IMR-90 (cell line): ENCODE measurements at regions of chr14 and their contacts with region 1.

Region 1: DNA sequence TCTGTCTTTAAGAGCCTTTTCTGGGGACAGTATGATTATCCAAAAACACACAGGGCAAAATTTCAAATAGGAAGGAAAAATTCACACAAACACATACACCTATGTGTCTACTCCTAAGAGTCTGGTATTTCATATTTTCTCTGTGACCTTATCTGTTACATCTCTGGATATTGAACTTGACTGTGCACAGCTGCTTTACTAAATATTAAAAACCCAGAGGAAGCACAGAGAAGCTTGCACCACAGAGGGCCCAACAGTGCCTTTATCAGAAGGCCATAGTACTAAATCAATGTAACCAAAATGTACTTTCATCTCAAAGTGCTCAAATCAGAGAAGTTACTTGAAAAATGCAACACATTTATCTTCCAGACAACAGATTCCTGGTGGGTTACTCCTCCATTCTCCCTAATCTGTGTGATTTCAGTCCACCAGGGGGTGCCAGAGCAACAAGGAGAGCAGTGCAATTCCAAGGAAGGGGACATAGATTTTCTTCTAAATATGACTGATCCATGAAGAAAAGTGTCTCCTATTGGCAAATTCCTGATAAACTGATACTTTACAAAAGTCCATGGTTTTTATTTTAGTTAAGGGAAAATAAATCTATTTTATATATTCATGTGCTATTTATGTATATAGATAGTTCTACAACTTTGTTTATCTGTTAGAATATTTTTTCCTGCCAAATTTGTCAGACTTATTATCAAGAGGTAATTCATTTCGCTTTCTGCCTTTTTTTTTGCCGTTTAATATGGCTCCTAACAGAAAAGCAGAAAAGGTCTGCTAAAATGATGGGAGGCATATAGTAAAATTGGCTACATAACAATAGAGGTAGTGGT is 617.6 kb downstream of the LRFN5 start:
- DNase-seq: peak; percentile 68
- ATAC-seq: peak; percentile 84
- H3K4me3 ChIP-seq: no peak overlapping the region
- H3K27ac ChIP-seq: no peak overlapping the region
- H3K4me1 ChIP-seq: no peaks in the 10 kb centered on the region; the same call in 1 of the 2 replicates
- H3K27me3 ChIP-seq: no peaks in the 10 kb centered on the region
- CTCF ChIP-seq: peak; percentile 72
- POLR2A ChIP-seq: no peak
- RAD21 ChIP-seq: peak; percentile 78

Region 2: GRCh38 chr14:41609704-41610183 is 614.5 kb before region 1 on chr14:
- CTCF ChIA-PET with region 1: no interaction called
- POLR2A ChIA-PET with region 1: no interaction called
- dilution Hi-C with region 1: no loop called
- in situ Hi-C with region 1: no loop called
- intact Hi-C with region 1: loop called (anchors 5 kb)
- DNase-seq: peak; percentile 58
- ATAC-seq: peak; percentile 43
- H3K4me3 ChIP-seq: peak overlapping the region; percentile 18
- H3K27ac ChIP-seq: no peak overlapping the region
- H3K4me1 ChIP-seq: no peaks in the 10 kb centered on the region
- H3K27me3 ChIP-seq: peaks cover 20% of the 10 kb centered on the region
- CTCF ChIP-seq: peak; percentile 46
- POLR2A ChIP-seq: no peak
- RAD21 ChIP-seq: peak; percentile 57

Region 3: GRCh38 chr14:42110166-42110723 is 114.0 kb before region 1 on chr14:
- CTCF ChIA-PET with region 1: no interaction called
- POLR2A ChIA-PET with region 1: no interaction called
- dilution Hi-C with region 1: no loop called
- in situ Hi-C with region 1: no loop called
- intact Hi-C with region 1: loop called (anchors 5 kb)
- DNase-seq: peak; percentile 71
- ATAC-seq: peak; percentile 98
- H3K4me3 ChIP-seq: no peak overlapping the region
- H3K27ac ChIP-seq: no peak overlapping the region
- H3K4me1 ChIP-seq: no peaks in the 10 kb centered on the region; the same call in 1 of the 2 replicates
- H3K27me3 ChIP-seq: no peaks in the 10 kb centered on the region
- CTCF ChIP-seq: peak; percentile 82
- POLR2A ChIP-seq: 0 out of 2 replicates have a peak, but pooled peaks have one; percentile 50
- RAD21 ChIP-seq: peak; percentile 96

Region 4: GRCh38 chr14:43005807-43006206 is 781.5 kb after region 1 on chr14:
- CTCF ChIA-PET with region 1: no interaction called
- POLR2A ChIA-PET with region 1: no interaction called
- dilution Hi-C with region 1: no loop called
- in situ Hi-C with region 1: loop called (anchors 10 kb)
- intact Hi-C with region 1: loop called (anchors 5 kb)
- DNase-seq: peak; percentile 23
- ATAC-seq: no peak
- H3K4me3 ChIP-seq: no peak overlapping the region
- H3K27ac ChIP-seq: no peak overlapping the region
- H3K4me1 ChIP-seq: no peaks in the 10 kb centered on the region
- H3K27me3 ChIP-seq: no peaks in the 10 kb centered on the region
- CTCF ChIP-seq: peak; percentile 42
- POLR2A ChIP-seq: no peak
- RAD21 ChIP-seq: peak; percentile 57